Mammary epithelial cell (primary cell): ENCODE measurements at regions of chr1 and their contacts with region 1.

Region 1: DNA sequence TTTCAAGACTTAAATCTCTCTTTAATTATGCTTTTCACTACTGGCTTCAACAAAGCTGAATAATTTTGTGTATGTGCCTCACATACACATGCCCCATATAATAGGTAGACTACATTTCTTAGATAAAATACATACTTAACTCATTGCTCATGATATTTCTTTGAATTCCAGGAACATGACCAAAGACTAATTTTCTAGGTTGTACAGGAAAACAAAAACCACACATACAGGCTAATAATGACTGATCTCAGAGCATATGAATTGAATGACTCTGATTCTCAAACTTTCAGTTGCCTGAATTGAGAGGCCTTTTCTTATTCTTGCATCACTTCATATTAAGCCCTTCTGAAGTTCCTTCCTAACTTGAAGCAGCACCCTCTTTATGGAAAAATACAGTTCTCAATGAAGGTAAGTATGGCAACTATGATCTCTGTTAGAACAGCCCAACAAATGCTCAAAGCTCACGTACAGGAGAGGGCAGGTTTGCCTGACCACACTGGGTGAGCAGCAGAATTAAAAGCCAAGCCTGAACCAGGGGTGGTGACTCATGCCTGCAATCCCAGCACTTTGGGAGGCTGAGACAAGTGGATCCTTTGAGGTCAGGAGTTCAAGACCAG is 22.6 kb upstream of the UAP1 start:
- DNase-seq: peak; percentile 93
- H3K4me3 ChIP-seq: no peak overlapping the region
- H3K27ac ChIP-seq: peak overlapping the region; percentile 76
- H3K4me1 ChIP-seq: peaks cover 42% of the 10 kb centered on the region
- H3K27me3 ChIP-seq: no peaks in the 10 kb centered on the region
- CTCF ChIP-seq: no peak

Region 2: DNA sequence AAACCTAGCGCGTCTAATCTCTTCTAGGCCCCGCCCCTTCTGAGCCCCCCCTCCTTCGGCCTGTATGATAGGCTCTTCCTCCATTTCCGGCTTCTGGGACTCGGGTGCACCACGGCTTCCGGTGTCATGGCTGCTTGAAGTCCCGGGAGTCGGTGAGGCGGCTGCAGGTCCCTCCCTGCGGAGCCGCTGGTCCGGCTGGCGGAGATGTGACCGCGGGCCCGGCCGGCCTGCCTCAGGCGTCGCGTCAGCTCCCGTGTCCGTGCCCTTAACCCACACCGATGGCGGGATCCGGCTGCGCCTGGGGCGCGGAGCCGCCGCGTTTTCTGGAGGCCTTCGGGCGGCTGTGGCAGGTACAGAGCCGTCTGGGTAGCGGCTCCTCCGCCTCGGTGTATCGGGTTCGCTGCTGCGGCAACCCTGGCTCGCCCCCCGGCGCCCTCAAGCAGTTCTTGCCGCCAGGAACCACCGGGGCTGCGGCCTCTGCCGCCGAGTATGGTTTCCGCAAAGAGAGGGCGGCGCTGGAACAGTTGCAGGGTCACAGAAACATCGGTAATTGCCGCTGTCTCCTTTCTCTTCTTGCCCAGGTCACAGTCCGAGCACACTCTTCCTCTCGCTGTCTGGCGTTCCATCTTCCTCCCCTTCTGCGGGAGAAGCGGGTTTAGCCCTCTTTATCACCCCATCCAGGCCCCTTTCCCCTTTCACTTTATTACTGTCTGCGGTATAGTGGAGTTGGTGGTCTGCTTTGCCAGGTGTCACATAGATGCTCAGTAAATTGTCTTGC is 41.0 kb before region 1 on chr1 and contains the start of gene UHMK1:
- CTCF ChIA-PET with region 1: no interaction called
- dilution Hi-C with region 1: no loop called
- in situ Hi-C with region 1: no loop called
- intact Hi-C with region 1: loop called (anchors 2 kb)
- DNase-seq: peak; percentile 84
- H3K4me3 ChIP-seq: peak within 1 kb of the TSS; percentile 80 to 96 (median 81)
- H3K27ac ChIP-seq: peak within 1 kb of the TSS; percentile 67
- H3K4me1 ChIP-seq: peaks cover 12% of the 10 kb centered on the region
- H3K27me3 ChIP-seq: no peaks in the 10 kb centered on the region
- CTCF ChIP-seq: peak in 1 of 2 donors; percentile 2
- total RNA-seq, gene UHMK1: 59.5 to 97.5 TPM

Region 3: DNA sequence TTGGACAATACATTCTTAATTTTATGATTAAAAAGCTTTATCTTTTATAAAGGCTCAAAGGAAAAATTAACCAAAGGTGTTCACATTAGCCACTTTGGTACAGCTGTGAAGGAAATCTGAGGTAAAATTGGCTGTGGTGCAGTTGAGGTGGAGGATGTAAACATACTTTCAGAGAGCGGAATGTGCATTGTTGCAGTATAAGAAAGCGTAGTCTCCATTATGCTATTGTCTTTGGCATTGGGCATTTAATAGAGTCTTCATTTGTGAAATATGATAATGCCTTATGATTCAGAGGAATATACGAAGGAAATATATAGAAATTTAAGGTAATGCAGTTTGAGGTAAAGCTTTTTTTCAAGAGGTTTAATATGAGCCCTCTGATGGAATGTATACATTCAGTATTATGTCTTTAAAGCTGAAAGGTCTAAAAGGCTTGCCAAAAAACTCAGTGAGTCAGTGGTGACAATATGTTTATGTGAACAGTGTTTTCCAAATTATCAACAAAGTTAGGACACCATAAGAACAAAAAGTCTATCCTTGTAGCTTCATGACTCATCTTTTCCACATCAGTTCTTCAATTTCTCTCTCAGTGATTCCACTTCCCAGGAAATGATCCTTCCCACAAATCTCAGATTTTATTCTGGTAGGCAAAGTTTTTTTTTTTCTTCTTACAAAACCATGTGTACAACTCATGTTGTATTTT is 66.5 kb after region 1 on chr1:
- CTCF ChIA-PET with region 1: no interaction called
- dilution Hi-C with region 1: no loop called
- in situ Hi-C with region 1: no loop called
- intact Hi-C with region 1: no loop called
- DNase-seq: peak; percentile 86
- H3K4me3 ChIP-seq: no peak overlapping the region
- H3K27ac ChIP-seq: peak overlapping the region; percentile 24
- H3K4me1 ChIP-seq: peaks cover 15% of the 10 kb centered on the region
- H3K27me3 ChIP-seq: no peaks in the 10 kb centered on the region
- CTCF ChIP-seq: no peak